MCF 10A (cell line): ENCODE measurements at regions of chr5 and their contacts with region 1.

Region 1: GRCh38 chr5:55959208-55959607 is 35.6 kb downstream of the IL6ST start:
- DNase-seq: no peak
- H3K4me3 Mint-ChIP-seq: no peak overlapping the region
- H3K27ac Mint-ChIP-seq: no peak overlapping the region
- H3K4me1 Mint-ChIP-seq: no peaks in the 10 kb centered on the region
- H3K27me3 Mint-ChIP-seq: no peaks in the 10 kb centered on the region
- CTCF ChIP-seq: no peak

Region 2: GRCh38 chr5:55800924-55801323 is 158.3 kb before region 1 on chr5:
- CTCF ChIA-PET with region 1: no interaction called
- POLR2A ChIA-PET with region 1: no interaction called
- intact Hi-C with region 1: no loop called
- DNase-seq: no peak
- H3K4me3 Mint-ChIP-seq: no peak overlapping the region
- H3K27ac Mint-ChIP-seq: no peak overlapping the region
- H3K4me1 Mint-ChIP-seq: no peaks in the 10 kb centered on the region
- H3K27me3 Mint-ChIP-seq: no peaks in the 10 kb centered on the region
- CTCF ChIP-seq: no peak

Region 3: GRCh38 chr5:55868846-55869245 is 90.4 kb before region 1 on chr5:
- CTCF ChIA-PET with region 1: no interaction called
- POLR2A ChIA-PET with region 1: no interaction called
- intact Hi-C with region 1: no loop called
- DNase-seq: peak; percentile 95
- H3K4me3 Mint-ChIP-seq: no peak overlapping the region
- H3K27ac Mint-ChIP-seq: peak overlapping the region; percentile 52
- H3K4me1 Mint-ChIP-seq: peaks cover 6% of the 10 kb centered on the region
- H3K27me3 Mint-ChIP-seq: no peaks in the 10 kb centered on the region
- CTCF ChIP-seq: no peak

Region 4: DNA sequence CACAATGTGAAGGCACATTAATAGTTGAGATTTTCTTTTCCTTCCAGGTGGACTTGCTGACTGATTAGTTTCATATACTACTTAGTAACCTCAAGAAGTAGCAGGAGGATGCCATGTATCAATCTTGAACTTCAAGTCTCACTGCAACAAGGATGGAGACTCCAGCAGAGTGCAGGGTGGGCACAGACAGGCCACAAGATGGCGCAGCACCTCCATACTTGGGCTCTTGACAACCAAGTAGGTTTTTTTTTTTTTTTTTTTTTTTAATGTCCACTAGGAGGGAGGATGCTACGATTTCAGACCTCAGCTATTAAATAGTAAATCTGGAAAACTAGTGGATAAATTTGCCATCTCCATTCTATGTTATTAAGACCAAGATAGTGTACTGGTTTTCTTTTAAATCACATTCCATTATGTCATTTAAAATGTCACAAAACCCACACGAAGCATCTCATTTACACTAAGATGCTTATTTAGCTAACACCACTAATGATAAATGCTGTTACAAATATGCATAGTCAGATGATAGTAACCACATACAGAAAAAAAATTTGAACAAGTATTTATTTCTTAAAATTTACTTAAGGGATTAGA is 23.0 kb before region 1 on chr5:
- CTCF ChIA-PET with region 1: interaction called, 11 read pairs
- POLR2A ChIA-PET with region 1: interaction called, 3 read pairs
- intact Hi-C with region 1: no loop called
- DNase-seq: peak; percentile 76
- H3K4me3 Mint-ChIP-seq: no peak overlapping the region
- H3K27ac Mint-ChIP-seq: no peak overlapping the region
- H3K4me1 Mint-ChIP-seq: no peaks in the 10 kb centered on the region
- H3K27me3 Mint-ChIP-seq: no peaks in the 10 kb centered on the region
- CTCF ChIP-seq: peak; percentile 60